Activated B cell treated with CpG ODN at 0.5 μM for 24 hours (primary cell): ENCODE measurements at regions of chr19 and their contacts with region 1.

Region 1: DNA sequence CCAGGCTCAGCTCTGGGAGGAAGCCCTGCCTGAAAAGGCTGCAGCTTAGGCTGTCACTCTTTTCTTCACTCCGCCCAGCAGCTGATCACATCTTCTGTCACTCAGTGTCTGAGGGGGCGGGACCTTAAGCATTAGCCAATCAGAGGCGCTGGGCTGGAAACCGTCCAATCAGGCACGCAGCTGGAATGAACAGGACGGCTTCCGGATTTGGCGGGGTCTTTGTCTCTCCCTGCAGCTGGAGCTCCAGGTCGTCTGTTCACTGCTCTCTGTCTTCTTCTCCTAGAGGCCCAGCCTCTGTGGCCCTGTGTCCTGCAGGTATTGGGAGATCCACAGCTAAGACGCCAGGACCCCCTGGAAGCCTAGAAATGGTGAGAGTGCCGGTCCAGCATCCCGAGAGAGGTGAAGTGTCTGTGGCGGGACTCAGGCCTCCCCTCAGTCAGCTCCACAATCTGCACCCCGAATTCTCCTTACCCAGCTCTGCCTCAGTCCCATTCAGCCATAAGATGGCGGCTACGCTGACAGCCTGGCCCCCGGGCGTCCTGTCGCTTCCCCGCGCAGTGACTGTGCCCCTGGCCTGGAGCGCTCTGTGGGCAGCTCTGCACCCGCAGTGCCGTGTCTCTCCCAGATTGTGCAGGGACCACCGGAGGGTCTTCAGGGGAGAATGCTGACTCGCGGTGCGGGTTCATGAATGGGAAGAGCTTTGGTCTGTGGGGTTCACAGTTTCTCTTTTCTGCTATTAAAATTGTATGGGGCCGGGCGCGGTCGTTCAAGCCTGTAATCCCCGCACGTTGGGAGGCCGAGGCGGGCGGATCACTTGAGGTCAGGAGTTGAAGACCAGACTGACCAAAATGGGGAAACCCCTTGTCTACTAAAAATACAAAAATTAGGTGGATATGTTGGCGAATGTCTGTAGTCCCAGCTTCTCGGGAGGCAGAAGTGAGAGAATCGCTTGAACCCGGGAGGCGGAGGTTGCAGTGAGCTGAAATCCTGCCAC is at the start of gene ZNF66:
- DNase-seq: peak; percentile 85
- ATAC-seq: peak; percentile 98
- H3K4me3 Mint-ChIP-seq: peak within 1 kb of the TSS; percentile 98
- H3K27ac Mint-ChIP-seq: peak within 1 kb of the TSS; percentile 91
- H3K4me1 Mint-ChIP-seq: peaks cover 10% of the 10 kb centered on the region
- H3K27me3 Mint-ChIP-seq: no peaks in the 10 kb centered on the region
- CTCF ChIP-seq: no peak
- total RNA-seq, gene ZNF66: 17.5 and 19.1 TPM in 2 replicates

Region 2: GRCh38 chr19:20077791-20078463 is 698.5 kb before region 1 on chr19 and contains the start of gene ZNF90:
- CTCF ChIA-PET with region 1: no interaction called
- POLR2A ChIA-PET with region 1: interaction called, 9 read pairs
- intact Hi-C with region 1: loop called (anchors 1 kb)
- DNase-seq: peak; percentile 73
- ATAC-seq: peak; percentile 99
- H3K4me3 Mint-ChIP-seq: peak within 1 kb of the TSS; percentile 96
- H3K27ac Mint-ChIP-seq: peak within 1 kb of the TSS; percentile 69
- H3K4me1 Mint-ChIP-seq: peaks cover 18% of the 10 kb centered on the region
- H3K27me3 Mint-ChIP-seq: no peaks in the 10 kb centered on the region
- CTCF ChIP-seq: no peak
- total RNA-seq, gene ZNF90: 9.8 and 12.5 TPM in 2 replicates

Region 3: DNA sequence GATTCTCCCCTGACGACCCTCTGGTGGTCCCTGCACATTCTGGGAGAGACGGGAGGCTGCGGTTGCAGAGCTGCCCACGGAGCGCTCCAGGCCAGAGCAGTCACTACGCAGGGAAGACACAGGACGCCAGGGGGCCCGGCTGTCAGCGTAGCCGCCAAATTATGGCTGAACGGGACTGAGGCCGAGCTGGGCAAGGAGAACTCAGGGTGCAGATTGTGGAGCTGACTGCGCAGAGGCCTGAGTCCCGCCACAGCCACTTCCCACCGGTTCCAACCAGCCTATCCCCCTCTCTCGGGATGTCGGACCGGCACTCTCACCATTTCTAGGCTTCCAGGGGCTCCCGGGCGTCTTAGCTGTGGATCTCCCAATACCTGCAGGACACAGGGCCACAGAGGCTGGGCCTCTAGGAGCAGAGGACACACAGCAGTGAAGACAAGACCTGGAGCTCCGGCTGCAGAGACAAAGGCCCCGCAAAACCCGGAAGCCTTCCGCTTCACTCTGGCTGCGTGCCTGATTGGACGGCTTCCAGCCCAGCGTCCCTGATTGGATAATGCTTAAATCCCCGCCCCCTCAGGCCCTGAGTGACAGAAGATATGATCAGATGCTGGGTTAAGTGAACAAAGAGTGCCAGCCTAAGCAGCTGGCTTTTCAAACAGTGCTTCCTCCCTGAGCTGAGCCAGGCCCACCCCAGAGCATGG is 210.9 kb before region 1 on chr19 and contains the start of gene ZNF737:
- CTCF ChIA-PET with region 1: no interaction called
- POLR2A ChIA-PET with region 1: interaction called, 33 read pairs
- intact Hi-C with region 1: loop called (anchors 2 kb)
- DNase-seq: peak; percentile 72
- ATAC-seq: peak; percentile 90
- H3K4me3 Mint-ChIP-seq: peak within 1 kb of the TSS; percentile 99
- H3K27ac Mint-ChIP-seq: peak within 1 kb of the TSS; percentile 99
- H3K4me1 Mint-ChIP-seq: peaks cover 32% of the 10 kb centered on the region
- H3K27me3 Mint-ChIP-seq: no peaks in the 10 kb centered on the region
- CTCF ChIP-seq: no peak
- total RNA-seq, gene ZNF737: 42.7 and 50.9 TPM in 2 replicates

Region 4: GRCh38 chr19:20612711-20613316 is 163.6 kb before region 1 on chr19:
- CTCF ChIA-PET with region 1: no interaction called
- POLR2A ChIA-PET with region 1: no interaction called
- intact Hi-C with region 1: no loop called
- DNase-seq: no peak
- ATAC-seq: no peak
- H3K4me3 Mint-ChIP-seq: no peak overlapping the region
- H3K27ac Mint-ChIP-seq: no peak overlapping the region
- H3K4me1 Mint-ChIP-seq: peaks cover 1% of the 10 kb centered on the region
- H3K27me3 Mint-ChIP-seq: no peaks in the 10 kb centered on the region
- CTCF ChIP-seq: no peak

Region 5: DNA sequence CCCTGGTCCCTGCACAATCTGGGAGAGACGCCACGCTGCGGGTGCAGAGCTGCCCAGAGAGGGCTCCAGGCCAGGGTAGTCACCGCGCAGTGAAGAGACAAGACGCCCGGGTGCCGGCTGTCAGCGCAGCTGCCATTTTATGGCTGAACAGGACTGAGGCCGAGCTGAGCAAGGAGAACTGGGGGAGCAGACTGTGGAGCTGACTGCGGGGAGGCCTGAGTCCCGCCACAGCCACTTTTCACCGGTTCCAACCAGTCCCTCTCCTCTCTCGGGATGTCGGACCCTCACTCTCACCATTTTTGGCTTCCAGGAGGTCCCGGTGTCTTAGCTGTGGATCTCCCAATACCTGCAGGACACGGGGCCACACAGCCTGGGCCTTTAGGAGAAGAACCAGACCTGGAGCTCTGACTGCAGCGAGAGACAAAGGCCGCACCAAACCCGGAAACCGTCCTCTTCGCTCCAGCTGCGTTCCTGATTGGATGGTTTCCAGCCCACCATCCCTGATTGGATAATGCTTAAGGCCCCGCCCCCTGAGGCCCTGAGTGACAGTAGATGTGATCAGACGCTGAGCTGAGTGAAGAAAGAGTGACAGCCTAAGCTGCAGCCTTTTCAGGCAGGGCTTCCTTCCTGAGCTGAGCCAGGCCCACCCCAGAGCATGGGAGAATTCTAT is 115.1 kb before region 1 on chr19 and contains the start of gene ZNF626:
- CTCF ChIA-PET with region 1: no interaction called
- POLR2A ChIA-PET with region 1: interaction called, 23 read pairs
- intact Hi-C with region 1: loop called (anchors 1 kb)
- DNase-seq: peak; percentile 80
- ATAC-seq: peak; percentile 98
- H3K4me3 Mint-ChIP-seq: peak within 1 kb of the TSS; percentile 95
- H3K27ac Mint-ChIP-seq: peak within 1 kb of the TSS; percentile 95
- H3K4me1 Mint-ChIP-seq: peaks cover 49% of the 10 kb centered on the region
- H3K27me3 Mint-ChIP-seq: no peaks in the 10 kb centered on the region
- CTCF ChIP-seq: no peak
- total RNA-seq, gene ZNF626: 16.1 and 17.2 TPM in 2 replicates

Region 6: GRCh38 chr19:20726755-20727154 is 49.6 kb before region 1 on chr19:
- CTCF ChIA-PET with region 1: no interaction called
- POLR2A ChIA-PET with region 1: no interaction called
- intact Hi-C with region 1: no loop called
- DNase-seq: no peak
- ATAC-seq: no peak
- H3K4me3 Mint-ChIP-seq: no peak overlapping the region
- H3K27ac Mint-ChIP-seq: no peak overlapping the region
- H3K4me1 Mint-ChIP-seq: no peaks in the 10 kb centered on the region
- H3K27me3 Mint-ChIP-seq: no peaks in the 10 kb centered on the region
- CTCF ChIP-seq: no peak

Region 7: GRCh38 chr19:21082011-21082975 is 305.9 kb after region 1 on chr19 and contains the start of gene ZNF714:
- CTCF ChIA-PET with region 1: no interaction called
- POLR2A ChIA-PET with region 1: interaction called, 4 read pairs
- intact Hi-C with region 1: loop called (anchors 5 kb)
- DNase-seq: peak; percentile 63
- ATAC-seq: peak; percentile 100
- H3K4me3 Mint-ChIP-seq: peak within 1 kb of the TSS; percentile 100
- H3K27ac Mint-ChIP-seq: peak within 1 kb of the TSS; percentile 93
- H3K4me1 Mint-ChIP-seq: peaks cover 13% of the 10 kb centered on the region
- H3K27me3 Mint-ChIP-seq: no peaks in the 10 kb centered on the region
- CTCF ChIP-seq: no peak
- total RNA-seq, gene ZNF714: 11.1 and 12.5 TPM in 2 replicates

Region 8: GRCh38 chr19:21824679-21825078 is 1048.3 kb after region 1 on chr19:
- CTCF ChIA-PET with region 1: no interaction called
- POLR2A ChIA-PET with region 1: interaction called, 10 read pairs
- intact Hi-C with region 1: no loop called
- DNase-seq: no peak
- ATAC-seq: no peak
- H3K4me3 Mint-ChIP-seq: no peak overlapping the region
- H3K27ac Mint-ChIP-seq: no peak overlapping the region
- H3K4me1 Mint-ChIP-seq: peaks cover 1% of the 10 kb centered on the region
- H3K27me3 Mint-ChIP-seq: no peaks in the 10 kb centered on the region
- CTCF ChIP-seq: no peak

Region 9: DNA sequence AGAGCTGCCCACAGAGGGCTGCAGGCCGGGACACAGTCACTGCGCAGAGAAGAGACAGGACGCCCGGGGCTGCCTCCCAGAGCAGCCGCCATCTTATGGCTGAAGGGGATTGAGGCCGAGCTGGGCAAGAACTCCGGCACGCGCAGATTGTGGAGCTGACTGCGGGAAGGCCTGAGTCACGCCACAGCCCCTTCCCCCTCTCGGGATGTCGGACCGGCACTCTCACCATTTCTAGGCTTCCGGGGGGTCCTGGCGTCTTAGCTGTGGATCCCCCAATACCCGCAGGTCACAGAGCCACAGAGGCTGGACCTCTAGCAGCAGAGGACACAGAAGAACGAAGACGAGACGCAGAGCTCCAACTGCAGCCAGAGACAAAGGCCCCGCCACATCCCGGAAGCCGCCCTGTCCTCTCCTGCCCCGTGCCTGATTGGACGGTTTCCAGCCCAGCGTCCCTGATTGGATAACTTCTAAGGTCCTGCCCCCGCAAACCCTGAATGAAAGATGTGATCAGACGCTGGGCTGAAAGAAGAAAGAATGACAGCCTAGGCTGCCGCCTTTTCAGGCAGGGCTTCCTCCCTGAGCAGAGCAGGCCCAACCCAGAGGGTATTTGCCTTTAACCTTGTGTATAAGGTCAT is 1059.5 kb after region 1 on chr19 and contains the start of gene ZNF43:
- CTCF ChIA-PET with region 1: no interaction called
- POLR2A ChIA-PET with region 1: interaction called, 10 read pairs
- intact Hi-C with region 1: no loop called
- DNase-seq: peak; percentile 77
- ATAC-seq: peak; percentile 98
- H3K4me3 Mint-ChIP-seq: peak within 1 kb of the TSS; percentile 100
- H3K27ac Mint-ChIP-seq: peak within 1 kb of the TSS; percentile 100
- H3K4me1 Mint-ChIP-seq: peaks cover 38% of the 10 kb centered on the region
- H3K27me3 Mint-ChIP-seq: no peaks in the 10 kb centered on the region
- CTCF ChIP-seq: no peak
- total RNA-seq, gene ZNF43: 41.8 and 52.4 TPM in 2 replicates